Panc1 (cell line): ENCODE measurements at regions of chr16 and their contacts with region 1.

Region 1: DNA sequence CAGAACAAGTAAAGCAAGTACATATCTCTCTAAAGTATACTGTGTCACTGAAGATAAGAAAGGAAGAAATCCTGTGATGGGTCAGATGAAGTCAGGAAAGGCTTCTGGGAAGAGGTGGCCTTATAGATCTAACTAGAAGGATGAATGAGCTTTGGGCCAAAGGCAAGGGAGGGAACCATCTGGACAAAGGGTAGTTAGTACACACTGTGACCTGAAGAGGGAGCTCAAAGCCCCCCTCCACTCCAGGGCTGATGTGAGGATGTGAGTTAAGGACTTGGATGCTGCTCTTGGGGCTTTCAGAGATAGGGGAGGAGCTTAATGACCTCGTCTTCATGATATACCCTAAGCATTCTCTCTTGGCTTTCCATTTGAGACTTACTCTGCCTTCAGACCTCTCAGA is 185.3 kb upstream of the CACNG3 start:
- DNase-seq: peak; percentile 17
- ATAC-seq: peak; percentile 82
- H3K4me3 ChIP-seq: no peak overlapping the region
- H3K27ac ChIP-seq: no peak overlapping the region
- H3K4me1 ChIP-seq: no peaks in the 10 kb centered on the region
- H3K27me3 ChIP-seq: peaks cover 9% of the 10 kb centered on the region
- CTCF ChIP-seq: peak; percentile 84

Region 2: GRCh38 chr16:24246911-24247607 is 176.2 kb after region 1 on chr16:
- CTCF ChIA-PET with region 1: interaction called, 14 read pairs
- POLR2A ChIA-PET with region 1: no interaction called
- in situ Hi-C with region 1: no loop called
- intact Hi-C with region 1: loop called (anchors 10 kb)
- DNase-seq: no peak
- ATAC-seq: no peak
- H3K4me3 ChIP-seq: no peak overlapping the region
- H3K27ac ChIP-seq: no peak overlapping the region
- H3K4me1 ChIP-seq: no peaks in the 10 kb centered on the region
- H3K27me3 ChIP-seq: 0 out of 2 replicates have a peak, but pooled peaks cover 2% of the 10 kb centered on the region
- CTCF ChIP-seq: no peak